Activated CD4-positive, alpha-beta T cell treated with anti-CD3 and anti-CD28 coated beads for 36 hours (primary cell): ENCODE measurements at regions of chr12 and their contacts with region 1.

Region 1: DNA sequence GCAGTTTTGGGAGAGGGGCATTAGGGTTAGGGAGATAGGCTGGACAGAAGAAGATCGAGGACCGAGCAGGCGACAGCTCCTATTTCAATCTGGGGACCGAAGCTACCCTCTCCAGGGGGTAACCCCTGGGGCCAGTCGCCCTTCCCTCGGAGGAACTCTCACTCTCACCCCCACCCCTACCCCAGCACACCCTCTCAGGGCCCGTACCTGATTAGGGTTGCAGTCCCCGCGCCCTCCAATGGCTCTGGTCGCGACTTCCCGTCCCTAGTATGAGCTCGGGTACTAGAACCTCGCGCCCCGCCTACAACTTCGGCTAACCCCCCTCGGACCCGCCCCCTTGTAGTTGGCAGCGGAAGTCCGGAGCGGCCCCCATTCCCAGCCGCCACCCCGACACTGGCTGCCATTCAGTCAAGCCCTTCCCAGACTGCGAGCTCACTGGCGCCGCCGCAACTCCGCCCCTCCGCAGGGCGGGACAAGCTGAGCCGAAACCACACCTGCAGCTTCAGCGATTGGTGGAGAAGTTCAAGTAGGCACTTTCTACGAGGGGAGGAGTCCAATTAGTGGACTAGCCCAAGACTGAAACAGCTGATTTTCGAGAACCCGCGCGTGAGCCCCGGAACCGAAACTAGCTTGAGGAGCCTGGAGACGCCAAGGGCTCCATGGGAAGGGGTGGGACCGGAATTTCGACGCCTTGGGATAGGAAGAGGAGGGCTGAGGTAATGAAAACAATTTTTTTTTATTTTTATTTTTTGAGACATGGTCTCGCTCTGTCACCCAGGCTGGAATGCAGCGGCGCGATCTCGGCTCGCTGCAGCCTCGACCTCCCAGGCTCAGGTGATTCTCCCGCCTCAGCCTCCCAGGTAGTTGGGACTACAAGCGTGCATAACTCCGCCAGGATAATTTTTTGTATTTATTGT is at the start of gene STAT2:
- DNase-seq: peak; percentile 99
- ATAC-seq: peak; percentile 97
- H3K4me3 Mint-ChIP-seq: peak within 1 kb of the TSS; percentile 86
- H3K27ac Mint-ChIP-seq: peak within 1 kb of the TSS; percentile 95
- H3K4me1 Mint-ChIP-seq: peaks cover 23% of the 10 kb centered on the region
- H3K27me3 Mint-ChIP-seq: no peaks in the 10 kb centered on the region
- total RNA-seq, gene STAT2: 116 to 124 TPM

Region 2: GRCh38 chr12:55817346-55818139 is 542.6 kb before region 1 on chr12 and contains the starts of genes ORMDL2 and SARNP:
- CTCF ChIA-PET with region 1: no interaction called
- POLR2A ChIA-PET with region 1: no interaction called
- intact Hi-C with region 1: loop called in 1 of 2 experiments (anchors 1 kb)
- DNase-seq: peak; percentile 97
- ATAC-seq: peak; percentile 98
- H3K4me3 Mint-ChIP-seq: no peak within 1 kb of the TSS
- H3K27ac Mint-ChIP-seq: no peak within 1 kb of the TSS
- H3K4me1 Mint-ChIP-seq: peaks cover 49% of the 10 kb centered on the region
- H3K27me3 Mint-ChIP-seq: no peaks in the 10 kb centered on the region
- total RNA-seq, gene ORMDL2: 29.4 to 35.6 TPM
- total RNA-seq, gene SARNP: 111 to 114 TPM

Region 3: GRCh38 chr12:56084958-56085543 is 275.1 kb before region 1 on chr12:
- CTCF ChIA-PET with region 1: no interaction called
- POLR2A ChIA-PET with region 1: no interaction called
- intact Hi-C with region 1: no loop called
- DNase-seq: peak; percentile 66
- ATAC-seq: peak; percentile 51
- H3K4me3 Mint-ChIP-seq: no peak overlapping the region
- H3K27ac Mint-ChIP-seq: no peak overlapping the region
- H3K4me1 Mint-ChIP-seq: peaks cover 4% of the 10 kb centered on the region
- H3K27me3 Mint-ChIP-seq: peaks cover 6% of the 10 kb centered on the region

Region 4: GRCh38 chr12:56189176-56189917 is 170.8 kb before region 1 on chr12 and contains the start of gene SMARCC2:
- CTCF ChIA-PET with region 1: interaction called, 15 read pairs
- POLR2A ChIA-PET with region 1: no interaction called
- intact Hi-C with region 1: loop called in 1 of 2 experiments (anchors 1 kb)
- DNase-seq: peak; percentile 94
- ATAC-seq: peak; percentile 82
- H3K4me3 Mint-ChIP-seq: peak within 1 kb of the TSS; percentile 82
- H3K27ac Mint-ChIP-seq: peak within 1 kb of the TSS; percentile 96
- H3K4me1 Mint-ChIP-seq: peaks cover 38% of the 10 kb centered on the region
- H3K27me3 Mint-ChIP-seq: no peaks in the 10 kb centered on the region
- total RNA-seq, gene SMARCC2: 96.9 to 123 TPM

Region 5: GRCh38 chr12:56315622-56316473 is 44.3 kb before region 1 on chr12 and contains the start of gene CNPY2:
- CTCF ChIA-PET with region 1: interaction called, 30 read pairs
- POLR2A ChIA-PET with region 1: interaction called, 15 read pairs
- intact Hi-C with region 1: loop called (anchors 1 to 2 kb)
- DNase-seq: peak; percentile 95
- ATAC-seq: peak; percentile 93
- H3K4me3 Mint-ChIP-seq: peak within 1 kb of the TSS; percentile 97
- H3K27ac Mint-ChIP-seq: peak within 1 kb of the TSS; percentile 95
- H3K4me1 Mint-ChIP-seq: peaks cover 18% of the 10 kb centered on the region
- H3K27me3 Mint-ChIP-seq: no peaks in the 10 kb centered on the region
- total RNA-seq, gene CNPY2: 77.4 to 82.6 TPM

Region 6: DNA sequence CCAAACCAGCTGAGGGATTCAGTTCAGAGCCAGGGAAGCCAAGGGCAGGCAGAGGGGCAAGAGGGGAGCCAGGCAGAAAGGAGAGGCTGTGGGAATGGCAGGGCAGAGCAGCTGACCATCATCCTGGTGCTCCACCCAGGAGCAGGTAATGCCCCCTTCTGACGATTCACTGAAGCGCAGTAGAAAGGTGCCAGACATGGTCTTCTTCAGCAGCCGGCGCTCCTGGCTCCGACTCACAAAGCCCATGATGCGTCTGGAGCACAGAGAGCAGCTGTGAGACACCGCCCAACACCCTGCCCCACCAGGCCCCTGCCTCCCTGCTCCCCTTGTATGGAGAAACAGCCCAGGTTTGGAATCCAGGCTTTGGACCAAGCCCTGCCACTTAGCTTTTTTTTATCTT is 13.4 kb before region 1 on chr12:
- CTCF ChIA-PET with region 1: interaction called, 15 read pairs
- POLR2A ChIA-PET with region 1: interaction called, 8 read pairs
- intact Hi-C with region 1: no loop called
- DNase-seq: peak; percentile 56
- ATAC-seq: peak; percentile 35
- H3K4me3 Mint-ChIP-seq: no peak overlapping the region
- H3K27ac Mint-ChIP-seq: no peak overlapping the region
- H3K4me1 Mint-ChIP-seq: peaks cover 3% of the 10 kb centered on the region
- H3K27me3 Mint-ChIP-seq: no peaks in the 10 kb centered on the region

Region 7: DNA sequence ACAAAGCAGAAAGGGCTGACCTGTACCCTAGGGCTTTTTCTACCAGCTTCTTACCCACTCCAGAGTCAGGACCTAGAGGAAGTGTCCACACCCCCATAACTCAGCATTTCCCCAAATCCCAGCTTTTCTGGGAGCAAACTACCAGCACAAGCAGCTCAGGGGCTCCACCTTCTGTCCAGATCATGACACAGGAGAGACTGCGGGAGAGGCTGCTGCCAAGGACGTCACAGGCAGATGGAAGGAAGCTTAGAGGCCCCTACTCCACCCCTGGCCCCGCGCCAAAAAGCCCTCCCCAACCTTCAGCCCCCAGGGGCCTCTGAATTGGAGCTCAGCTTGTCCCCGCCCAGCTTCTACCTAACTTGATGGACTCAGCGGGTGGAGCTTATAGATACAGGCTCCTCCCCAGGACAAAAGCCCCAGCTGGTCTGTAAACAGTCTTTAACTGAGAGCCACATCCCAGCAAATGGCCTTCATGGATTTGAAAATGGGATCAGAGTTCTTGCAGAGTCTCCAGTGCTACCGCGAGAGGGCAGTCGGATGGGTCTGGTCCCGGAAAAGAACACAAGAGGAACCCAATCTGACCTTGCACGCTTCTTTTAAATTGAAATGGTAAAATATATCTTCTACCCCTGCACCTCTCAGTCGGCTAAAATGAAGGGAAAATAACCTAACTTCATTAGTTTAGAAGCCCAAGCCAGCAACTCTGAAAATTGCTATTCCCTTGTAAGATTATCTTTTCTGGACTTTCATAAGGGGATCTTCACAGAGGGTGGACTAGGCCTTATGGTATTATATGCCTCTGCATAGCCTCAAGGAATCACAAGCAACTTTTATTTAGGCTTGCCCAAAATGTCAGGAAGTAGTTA is 276.8 kb after region 1 on chr12:
- CTCF ChIA-PET with region 1: no interaction called
- POLR2A ChIA-PET with region 1: no interaction called
- intact Hi-C with region 1: loop called in 1 of 2 experiments (anchors 2 kb)
- DNase-seq: peak; percentile 98
- ATAC-seq: peak; percentile 73
- H3K4me3 Mint-ChIP-seq: peak overlapping the region; percentile 87
- H3K27ac Mint-ChIP-seq: peak overlapping the region; percentile 92
- H3K4me1 Mint-ChIP-seq: peaks cover 60% of the 10 kb centered on the region
- H3K27me3 Mint-ChIP-seq: no peaks in the 10 kb centered on the region